ENCODE measurements at regions of chr12 and their contacts with region 1.

Region 1: GRCh38 chr12:80648881-80649280 is 58.6 kb upstream of the MYF6 start:
- DNase-seq: no peak
- H3K4me3 ChIP-seq: no peak overlapping the region
- H3K27ac ChIP-seq: no peak overlapping the region
- H3K4me1 ChIP-seq: no peaks in the 10 kb centered on the region
- H3K27me3 ChIP-seq: no peaks in the 10 kb centered on the region
- CTCF ChIP-seq: no peak
- POLR2A ChIP-seq: no peak

Region 2: DNA sequence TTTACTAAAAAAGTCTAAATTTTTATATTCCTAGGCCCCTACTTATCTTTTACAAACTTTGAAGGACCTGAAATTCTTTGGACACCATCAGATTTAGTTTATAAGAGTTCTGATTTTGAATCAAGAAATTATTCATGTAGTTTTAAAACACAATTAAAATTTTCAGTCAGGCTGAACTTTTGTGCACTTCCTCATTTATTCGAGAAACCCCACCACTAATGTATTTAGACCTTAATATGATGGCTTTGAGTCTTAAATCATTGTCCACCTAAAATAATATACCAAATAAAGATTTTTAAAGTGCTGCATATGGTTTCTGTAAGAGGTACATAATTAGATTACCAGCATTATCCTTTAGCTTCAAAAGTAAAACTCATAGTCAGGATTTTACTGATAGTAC is 1061.5 kb before region 1 on chr12:
- intact Hi-C with region 1: loop called (anchors 10 kb)
- DNase-seq: no peak
- H3K4me3 ChIP-seq: no peak overlapping the region
- H3K27ac ChIP-seq: no peak overlapping the region
- H3K4me1 ChIP-seq: no peaks in the 10 kb centered on the region
- H3K27me3 ChIP-seq: no peaks in the 10 kb centered on the region
- CTCF ChIP-seq: no peak
- POLR2A ChIP-seq: no peak

Region 3: GRCh38 chr12:80679346-80680131 is 30.7 kb after region 1 on chr12:
- intact Hi-C with region 1: no loop called
- DNase-seq: no peak
- H3K4me3 ChIP-seq: no peak overlapping the region
- H3K27ac ChIP-seq: no peak overlapping the region
- H3K4me1 ChIP-seq: no peaks in the 10 kb centered on the region
- H3K27me3 ChIP-seq: no peaks in the 10 kb centered on the region
- CTCF ChIP-seq: no peak
- POLR2A ChIP-seq: no peak